Activated T-helper 1 cell treated with anti-CD3 and anti-CD28 coated beads, Interleukin-12 subunit alpha, Interleukin-12 subunit beta, Interleukin-2, Interleukin-4 antibody, amounts not matched to agents 30 ng/mL and 10 ng/mL and 1 ng/mL, durations not matched to agents 14 hours and 24 hours and 36 hours (primary cell): ENCODE measurements at regions of chr15 and their contacts with region 1.

Region 1: GRCh38 chr15:84981054-84981710 is 474 bp upstream of the PDE8A start:
- DNase-seq: peak; percentile 96
- H3K4me3 Mint-ChIP-seq: peak overlapping the region; percentile 95
- H3K27ac Mint-ChIP-seq: peak overlapping the region; percentile 93
- H3K4me1 Mint-ChIP-seq: peaks cover 40% of the 10 kb centered on the region
- H3K27me3 Mint-ChIP-seq: peaks cover 18% of the 10 kb centered on the region

Region 2: GRCh38 chr15:84570164-84570735 is 410.9 kb before region 1 on chr15:
- intact Hi-C with region 1: loop called (anchors 5 kb)
- DNase-seq: peak; percentile 52
- H3K4me3 Mint-ChIP-seq: peak overlapping the region; percentile 84
- H3K27ac Mint-ChIP-seq: peak overlapping the region; percentile 90
- H3K4me1 Mint-ChIP-seq: peaks cover 11% of the 10 kb centered on the region
- H3K27me3 Mint-ChIP-seq: peaks cover 17% of the 10 kb centered on the region

Region 3: DNA sequence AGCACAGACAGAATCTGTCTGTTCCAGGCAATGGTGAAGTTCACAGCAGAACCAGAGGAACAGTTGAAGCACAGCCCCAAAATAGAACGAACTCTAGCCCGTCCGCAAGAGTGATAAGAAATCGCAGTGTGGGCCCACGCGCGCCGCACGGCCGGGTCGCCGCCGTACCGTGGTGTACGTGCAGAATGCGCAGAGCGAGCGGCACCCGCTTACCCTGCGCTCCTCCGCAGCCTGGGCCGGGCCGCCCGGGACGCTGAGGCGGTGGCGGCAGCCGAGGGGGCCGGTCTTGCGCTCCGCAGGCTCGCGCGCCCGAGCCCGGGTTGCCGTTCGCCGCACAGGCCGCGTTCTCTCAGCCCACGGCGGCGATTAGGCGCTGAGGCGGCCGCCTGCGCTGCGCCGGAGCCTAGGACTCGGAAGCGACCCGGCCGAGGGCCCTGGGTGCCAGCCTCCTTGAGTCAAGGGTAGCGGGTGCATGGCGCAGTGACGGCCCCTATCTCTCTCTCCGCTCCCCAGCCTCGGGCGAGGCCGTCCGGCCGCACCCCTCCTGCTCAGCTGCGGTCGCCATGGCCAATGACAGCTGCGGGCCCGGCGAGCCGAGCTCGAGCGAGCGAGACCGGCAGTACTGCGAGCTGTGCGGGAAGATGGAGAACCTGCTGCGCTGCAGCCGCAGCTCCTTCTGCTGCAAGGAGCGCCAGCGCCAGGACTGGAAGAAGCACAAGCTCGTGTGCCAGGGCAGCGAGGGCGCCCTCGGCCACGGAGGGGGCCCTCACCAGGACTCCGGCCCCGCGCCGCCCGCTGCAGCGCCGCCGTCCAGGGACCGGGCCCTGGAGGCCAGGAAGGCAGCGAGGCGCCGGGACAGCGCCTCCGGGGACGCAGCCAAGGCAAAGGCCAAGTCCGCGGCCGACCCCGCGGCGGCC is 347.6 kb before region 1 on chr15:
- intact Hi-C with region 1: loop called (anchors 2 kb)
- DNase-seq: peak; percentile 60
- H3K4me3 Mint-ChIP-seq: peak overlapping the region; percentile 95
- H3K27ac Mint-ChIP-seq: peak overlapping the region; percentile 98
- H3K4me1 Mint-ChIP-seq: peaks cover 57% of the 10 kb centered on the region
- H3K27me3 Mint-ChIP-seq: no peaks in the 10 kb centered on the region

Region 4: DNA sequence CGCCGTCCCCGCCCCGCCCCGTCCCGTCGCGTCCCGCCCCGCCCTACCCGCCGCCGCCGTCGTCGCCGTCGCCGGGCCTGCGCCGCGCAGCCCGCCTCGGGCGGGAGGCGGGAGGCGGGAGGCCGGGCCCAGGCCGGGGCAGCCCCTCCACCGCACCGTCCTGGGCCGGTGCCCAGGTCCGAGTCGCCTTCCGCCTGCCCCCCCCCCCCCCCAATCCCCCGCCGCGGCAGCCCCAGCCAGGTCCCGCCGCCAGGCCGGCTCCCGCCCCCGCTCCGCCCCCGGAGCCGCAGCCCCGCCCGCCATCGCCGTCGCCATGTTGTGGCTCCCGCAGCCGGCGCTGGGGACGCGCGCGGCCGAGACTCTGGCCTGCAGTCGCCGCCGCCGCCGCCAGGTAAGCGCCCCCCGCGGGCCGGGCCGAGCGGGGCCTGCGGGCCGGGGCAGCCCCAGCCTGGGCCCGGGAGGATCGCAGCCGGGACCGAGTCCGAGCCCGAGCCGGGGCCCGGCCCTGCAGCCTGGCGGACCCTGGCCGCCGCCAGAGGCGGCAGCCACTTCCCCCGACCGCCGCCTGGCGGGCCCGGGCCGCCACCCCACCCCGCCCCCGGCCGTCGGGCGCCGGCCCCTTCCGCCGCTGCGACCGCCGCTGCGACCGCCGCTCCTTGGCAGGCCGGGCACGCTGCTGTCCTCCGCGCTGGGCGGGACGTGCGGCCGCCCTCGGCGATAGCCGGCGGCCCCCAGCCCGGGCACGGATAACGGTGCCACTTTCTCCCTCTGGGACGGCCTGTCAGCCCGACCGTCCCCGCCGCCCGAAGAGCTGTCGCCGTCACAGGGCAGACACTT is 232.7 kb before region 1 on chr15 and contains the start of gene ZNF592:
- intact Hi-C with region 1: loop called (anchors 10 kb)
- DNase-seq: peak; percentile 75
- H3K4me3 Mint-ChIP-seq: peak within 1 kb of the TSS; percentile 91
- H3K27ac Mint-ChIP-seq: peak within 1 kb of the TSS; percentile 95
- H3K4me1 Mint-ChIP-seq: peaks cover 56% of the 10 kb centered on the region
- H3K27me3 Mint-ChIP-seq: no peaks in the 10 kb centered on the region
- total RNA-seq, gene ZNF592: 29.9 and 30.9 TPM in 2 replicates

Region 5: GRCh38 chr15:84883916-84884768 is 97.0 kb before region 1 on chr15 and contains the start of gene SLC28A1:
- intact Hi-C with region 1: no loop called
- DNase-seq: no peak
- H3K4me3 Mint-ChIP-seq: no peak within 1 kb of the TSS
- H3K27ac Mint-ChIP-seq: no peak within 1 kb of the TSS
- H3K4me1 Mint-ChIP-seq: no peaks in the 10 kb centered on the region
- H3K27me3 Mint-ChIP-seq: no peaks in the 10 kb centered on the region
- total RNA-seq, gene SLC28A1: not detected in 2 replicates

Region 6: DNA sequence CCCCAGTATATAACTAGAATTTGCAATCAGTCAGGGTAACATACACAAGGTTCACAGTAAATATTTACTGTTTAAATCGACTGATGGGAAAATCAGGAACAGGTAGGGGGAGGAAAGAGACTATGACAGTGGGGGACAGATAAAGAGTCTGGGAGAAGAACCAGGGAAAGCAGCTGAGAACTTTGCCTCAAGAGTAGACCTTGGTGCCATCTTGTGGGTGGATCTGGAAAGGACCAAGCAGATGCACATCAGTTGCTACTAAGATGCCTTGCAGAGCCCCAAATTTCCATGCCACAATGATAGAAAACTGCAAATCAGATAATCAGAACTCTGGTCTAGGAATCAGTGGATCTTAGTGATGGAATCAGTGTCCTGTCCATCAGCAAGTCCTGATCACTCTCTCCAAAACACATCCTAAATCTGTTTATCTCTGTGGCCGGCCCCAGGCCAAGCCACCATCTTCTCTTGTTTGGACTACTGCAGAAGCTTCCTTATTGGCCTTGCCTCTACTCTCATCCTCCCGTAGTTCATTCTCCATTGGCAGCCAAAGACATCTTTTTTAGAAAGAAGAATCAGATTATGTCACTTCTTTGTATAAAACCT is 63.2 kb after region 1 on chr15:
- intact Hi-C with region 1: loop called (anchors 2 kb)
- DNase-seq: no peak
- H3K4me3 Mint-ChIP-seq: no peak overlapping the region
- H3K27ac Mint-ChIP-seq: no peak overlapping the region
- H3K4me1 Mint-ChIP-seq: peaks cover 12% of the 10 kb centered on the region
- H3K27me3 Mint-ChIP-seq: no peaks in the 10 kb centered on the region

Region 7: DNA sequence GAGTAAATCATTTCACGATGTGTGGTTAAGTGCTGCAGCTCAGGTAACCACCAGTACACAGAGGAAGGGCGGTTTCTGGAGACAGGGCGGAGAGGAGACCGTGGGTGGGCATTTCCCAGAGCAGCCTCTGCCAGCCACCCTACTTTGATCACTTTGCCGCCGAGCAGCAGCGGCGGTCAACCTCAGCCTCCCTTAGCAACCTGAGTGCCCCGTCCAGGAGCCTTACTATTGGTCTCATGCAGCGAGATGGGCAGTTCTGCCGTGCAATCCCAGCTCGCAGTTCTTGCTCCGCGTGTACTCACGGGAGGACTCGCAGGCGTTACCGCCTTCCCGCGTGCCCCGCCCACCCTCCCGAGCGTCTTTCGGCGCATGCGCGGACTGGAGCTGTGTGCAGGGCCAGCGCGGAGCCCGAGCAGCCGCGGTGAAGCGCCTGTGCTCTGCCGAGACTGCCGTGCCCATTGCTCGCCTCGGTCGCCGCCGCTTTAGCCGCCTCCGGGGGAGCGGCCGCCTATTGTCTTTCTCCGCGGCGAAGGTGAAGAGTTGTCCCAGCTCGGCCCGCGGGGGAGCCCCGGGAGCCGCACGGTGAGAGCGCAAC is 399.1 kb after region 1 on chr15 and contains the start of gene AKAP13:
- intact Hi-C with region 1: loop called (anchors 10 kb)
- DNase-seq: peak; percentile 93
- H3K4me3 Mint-ChIP-seq: peak within 1 kb of the TSS; percentile 90
- H3K27ac Mint-ChIP-seq: peak within 1 kb of the TSS; percentile 94
- H3K4me1 Mint-ChIP-seq: peaks cover 68% of the 10 kb centered on the region
- H3K27me3 Mint-ChIP-seq: peaks cover 2% of the 10 kb centered on the region
- total RNA-seq, gene AKAP13: 78.9 and 81.9 TPM in 2 replicates